ENCODE measurements at regions of chr3 and their contacts with region 1.

Region 1: DNA sequence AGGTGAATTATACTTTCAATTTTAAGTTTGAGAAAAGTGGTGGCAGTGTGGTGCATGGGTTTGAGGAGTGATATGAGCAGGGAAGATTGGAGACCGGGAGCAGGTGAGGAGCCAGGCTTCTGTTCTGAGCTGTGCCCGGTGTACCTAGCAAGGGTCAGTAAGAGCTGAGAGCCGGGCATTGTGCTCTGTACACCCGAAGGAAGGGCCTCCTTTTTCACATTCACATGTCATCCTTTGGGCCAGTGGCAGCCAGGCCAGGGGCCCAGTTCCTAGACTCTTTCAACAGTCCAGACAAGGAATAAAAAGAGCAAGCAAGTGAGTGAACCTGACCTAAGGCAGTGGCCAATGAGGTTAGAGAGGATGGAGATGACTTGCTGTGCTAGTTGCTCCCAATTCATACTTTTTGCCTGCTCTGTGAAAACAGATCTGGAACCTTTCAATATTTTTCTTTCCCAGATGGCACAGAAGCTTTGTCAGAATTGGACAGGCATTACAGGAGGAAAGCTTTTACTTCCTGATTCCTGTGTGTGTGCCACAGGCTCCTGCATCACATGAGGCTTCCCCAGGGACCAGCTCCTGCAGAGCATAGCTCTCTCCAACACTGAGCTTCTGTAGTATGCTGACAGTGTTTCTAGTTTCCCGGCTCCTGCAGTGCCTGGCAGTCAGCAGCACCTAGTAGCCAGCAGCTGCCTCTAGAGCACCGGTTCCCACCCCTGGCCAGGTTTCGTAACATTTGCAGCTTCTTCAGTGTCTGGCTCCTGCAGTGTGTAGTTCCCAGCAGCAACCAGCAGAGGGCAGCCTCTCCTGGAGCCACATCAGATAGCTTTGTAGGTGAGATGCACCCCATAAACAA is 5.3 kb upstream of the TRA2B start:
- DNase-seq: peak; percentile 88
- H3K4me3 Mint-ChIP-seq: peak overlapping the region; percentile 8
- H3K27ac Mint-ChIP-seq: no peak overlapping the region
- H3K4me1 Mint-ChIP-seq: peaks cover 15% of the 10 kb centered on the region
- H3K27me3 Mint-ChIP-seq: peaks cover 15% of the 10 kb centered on the region

Region 2: GRCh38 chr3:185912929-185913901 is 29.9 kb before region 1 on chr3:
- CTCF ChIA-PET with region 1: interaction called, 12 read pairs
- POLR2A ChIA-PET with region 1: interaction called, 44 read pairs
- DNase-seq: no peak
- H3K4me3 Mint-ChIP-seq: no peak overlapping the region
- H3K27ac Mint-ChIP-seq: no peak overlapping the region
- H3K4me1 Mint-ChIP-seq: no peaks in the 10 kb centered on the region
- H3K27me3 Mint-ChIP-seq: no peaks in the 10 kb centered on the region

Region 3: DNA sequence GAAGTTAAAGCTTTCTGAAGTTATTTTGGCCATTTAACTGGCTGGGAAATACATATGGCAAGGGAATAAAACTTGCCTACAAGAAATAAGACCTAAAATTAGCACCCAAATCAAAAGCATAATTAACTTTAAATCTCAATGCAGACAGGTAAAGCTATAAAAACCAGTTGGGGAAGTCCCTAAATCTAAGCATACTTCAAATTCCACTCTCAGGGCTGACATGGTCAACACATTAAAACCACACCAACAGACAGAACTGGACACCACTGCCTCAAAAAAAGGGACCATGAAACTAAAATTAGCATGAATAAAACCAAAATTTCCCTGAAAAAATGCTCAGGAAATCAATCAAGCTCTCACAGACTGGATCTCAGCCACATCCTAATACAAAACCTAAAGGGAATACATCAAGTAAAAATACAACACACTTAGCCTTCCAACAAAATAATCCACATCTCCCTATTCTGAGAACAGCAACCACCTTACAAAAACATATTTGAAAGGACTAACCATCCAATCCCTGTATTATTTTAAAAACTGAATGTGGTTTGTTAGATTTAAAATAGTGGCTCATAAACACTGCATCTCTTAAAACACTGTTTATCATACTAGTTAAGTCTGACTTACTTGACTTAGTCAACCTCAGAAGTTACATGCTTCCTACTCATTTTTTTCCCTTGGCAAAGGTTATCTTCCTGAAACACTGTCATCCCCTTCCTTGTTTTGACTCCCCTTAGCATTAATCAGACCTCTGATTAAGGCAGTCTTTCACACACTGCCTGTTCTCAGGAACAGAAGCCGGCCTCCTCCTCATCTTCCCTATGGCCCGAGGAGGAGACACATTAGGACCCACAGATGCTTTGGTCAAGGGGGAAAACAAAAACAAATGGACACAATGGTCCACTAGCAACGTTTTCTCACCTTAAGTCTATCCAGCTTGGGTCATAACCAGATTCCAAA is 13.7 kb before region 1 on chr3:
- CTCF ChIA-PET with region 1: interaction called, 50 read pairs
- POLR2A ChIA-PET with region 1: interaction called, 210 read pairs
- DNase-seq: no peak
- H3K4me3 Mint-ChIP-seq: peak overlapping the region; percentile 51
- H3K27ac Mint-ChIP-seq: peak overlapping the region; percentile 25
- H3K4me1 Mint-ChIP-seq: peaks cover 94% of the 10 kb centered on the region
- H3K27me3 Mint-ChIP-seq: no peaks in the 10 kb centered on the region

Region 4: DNA sequence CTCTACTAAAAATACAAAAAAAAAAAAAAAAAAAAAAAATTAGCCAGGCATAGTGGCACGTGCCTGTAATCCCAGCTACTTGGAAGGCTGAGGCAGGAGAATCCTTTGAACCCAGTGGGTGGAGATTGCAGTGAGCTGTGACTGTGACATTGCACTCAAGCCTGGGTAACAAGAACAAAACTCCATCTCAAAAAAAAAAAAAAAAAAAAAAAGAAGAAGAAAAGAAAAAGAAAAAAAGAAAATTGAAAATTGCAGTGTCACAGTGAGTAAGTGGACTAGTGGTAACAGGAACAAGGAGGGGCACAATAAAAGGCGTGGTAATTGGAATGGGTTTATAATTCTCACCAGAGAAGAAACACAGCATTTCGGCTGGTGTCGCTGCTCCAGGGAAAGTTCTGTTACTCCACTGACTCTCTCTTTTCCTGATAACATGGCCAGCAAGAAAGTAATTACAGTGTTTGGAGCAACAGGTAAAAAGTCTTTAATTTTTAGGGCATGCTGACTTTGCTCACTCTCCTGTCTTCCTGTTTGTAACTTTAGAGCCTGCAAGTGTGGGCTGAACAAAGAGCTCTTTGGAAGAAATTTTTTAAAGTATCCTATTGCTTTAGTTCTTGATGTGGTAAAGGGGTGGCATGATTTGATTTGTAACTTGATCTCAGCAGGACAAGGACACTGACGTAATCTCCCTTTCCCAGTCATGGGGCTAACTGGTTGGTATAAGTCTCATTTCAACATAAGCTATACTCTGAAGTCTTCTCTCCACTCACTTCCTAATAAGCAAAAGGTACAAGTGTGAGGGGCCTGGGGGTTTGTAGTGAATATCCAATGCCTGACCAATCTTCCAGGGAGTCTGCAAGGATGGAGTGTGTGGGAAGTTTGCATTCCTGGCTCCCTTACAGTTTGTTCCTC is 16.7 kb after region 1 on chr3:
- CTCF ChIA-PET with region 1: interaction called, 62 read pairs
- POLR2A ChIA-PET with region 1: no interaction called
- DNase-seq: no peak
- H3K4me3 Mint-ChIP-seq: no peak overlapping the region
- H3K27ac Mint-ChIP-seq: no peak overlapping the region
- H3K4me1 Mint-ChIP-seq: peaks cover 2% of the 10 kb centered on the region
- H3K27me3 Mint-ChIP-seq: peaks cover 9% of the 10 kb centered on the region

Region 5: DNA sequence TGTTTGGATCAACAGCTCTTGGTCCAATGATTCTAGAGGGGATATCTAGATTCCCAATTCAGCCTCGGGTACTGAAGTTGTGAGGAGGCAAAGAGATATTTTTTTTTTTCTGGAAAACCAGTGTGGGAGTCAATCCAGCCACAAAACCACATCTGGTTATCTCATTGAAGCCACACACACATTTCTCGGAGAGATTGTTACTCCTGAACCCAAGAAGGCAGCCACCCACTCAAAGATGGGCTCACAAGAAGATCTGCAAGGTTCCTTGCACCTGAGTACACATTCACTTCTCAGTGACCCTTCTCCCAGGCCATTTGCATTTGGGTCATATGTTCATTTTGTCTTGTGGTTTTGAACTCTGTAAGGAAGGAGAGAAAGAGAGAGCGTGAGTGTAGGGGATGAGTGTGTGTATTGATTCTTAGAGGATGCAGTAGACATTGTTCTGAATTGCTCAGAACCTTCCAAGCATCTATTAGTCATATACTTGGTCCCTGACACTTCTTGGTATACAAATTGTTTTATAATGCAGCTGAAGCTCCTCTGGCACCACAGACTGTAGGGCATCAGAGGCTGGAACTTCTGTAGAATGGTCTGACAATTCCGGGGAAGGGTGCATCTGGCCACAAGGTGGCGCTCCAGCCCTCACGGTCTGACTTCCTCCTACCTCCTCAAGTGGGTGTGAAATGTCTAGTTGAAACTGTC is 34.0 kb after region 1 on chr3:
- CTCF ChIA-PET with region 1: interaction called, 50 read pairs
- POLR2A ChIA-PET with region 1: interaction called, 3 read pairs
- DNase-seq: peak; percentile 84
- H3K4me3 Mint-ChIP-seq: no peak overlapping the region
- H3K27ac Mint-ChIP-seq: no peak overlapping the region
- H3K4me1 Mint-ChIP-seq: peaks cover 11% of the 10 kb centered on the region
- H3K27me3 Mint-ChIP-seq: peaks cover 15% of the 10 kb centered on the region

Region 6: GRCh38 chr3:186551387-186551786 is 608.3 kb after region 1 on chr3:
- CTCF ChIA-PET with region 1: interaction called, 10 read pairs
- POLR2A ChIA-PET with region 1: no interaction called
- DNase-seq: no peak
- H3K4me3 Mint-ChIP-seq: no peak overlapping the region
- H3K27ac Mint-ChIP-seq: no peak overlapping the region
- H3K4me1 Mint-ChIP-seq: no peaks in the 10 kb centered on the region
- H3K27me3 Mint-ChIP-seq: no peaks in the 10 kb centered on the region

Measured in activated CD4-positive, alpha-beta memory T cell treated with anti-CD3 and anti-CD28 coated beads, Interleukin-2, amount 10 ng/mL, durations not matched to agents 7 days and 5 days (primary cell).